PC-9 (cell line): ENCODE measurements at regions of chr7 and their contacts with region 1.

Region 1: DNA sequence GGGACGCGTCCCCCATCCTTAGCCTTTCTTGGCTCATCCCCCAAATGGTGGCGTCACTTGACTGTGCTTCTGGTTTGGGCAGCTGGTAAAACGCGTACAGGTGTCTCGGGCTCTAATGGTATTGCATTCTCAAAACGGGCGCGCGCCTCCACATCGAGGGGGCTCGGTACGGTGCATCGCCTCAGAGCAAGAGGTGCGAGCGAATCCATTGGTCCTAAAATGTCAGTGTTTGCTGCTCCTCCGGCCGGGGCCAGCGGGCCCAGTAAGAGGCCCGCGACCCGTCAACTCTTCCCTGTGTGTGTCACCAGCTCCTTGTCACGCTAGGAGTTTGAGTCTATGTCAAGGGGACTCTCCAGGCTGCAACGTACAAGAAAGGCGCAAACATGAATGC is 90.6 kb upstream of the SH2B2 start:
- DNase-seq: no peak
- H3K4me3 ChIP-seq: no peak overlapping the region
- H3K27ac ChIP-seq: no peak overlapping the region
- H3K4me1 ChIP-seq: no peaks in the 10 kb centered on the region
- H3K27me3 ChIP-seq: no peaks in the 10 kb centered on the region
- CTCF ChIP-seq: no peak

Region 2: DNA sequence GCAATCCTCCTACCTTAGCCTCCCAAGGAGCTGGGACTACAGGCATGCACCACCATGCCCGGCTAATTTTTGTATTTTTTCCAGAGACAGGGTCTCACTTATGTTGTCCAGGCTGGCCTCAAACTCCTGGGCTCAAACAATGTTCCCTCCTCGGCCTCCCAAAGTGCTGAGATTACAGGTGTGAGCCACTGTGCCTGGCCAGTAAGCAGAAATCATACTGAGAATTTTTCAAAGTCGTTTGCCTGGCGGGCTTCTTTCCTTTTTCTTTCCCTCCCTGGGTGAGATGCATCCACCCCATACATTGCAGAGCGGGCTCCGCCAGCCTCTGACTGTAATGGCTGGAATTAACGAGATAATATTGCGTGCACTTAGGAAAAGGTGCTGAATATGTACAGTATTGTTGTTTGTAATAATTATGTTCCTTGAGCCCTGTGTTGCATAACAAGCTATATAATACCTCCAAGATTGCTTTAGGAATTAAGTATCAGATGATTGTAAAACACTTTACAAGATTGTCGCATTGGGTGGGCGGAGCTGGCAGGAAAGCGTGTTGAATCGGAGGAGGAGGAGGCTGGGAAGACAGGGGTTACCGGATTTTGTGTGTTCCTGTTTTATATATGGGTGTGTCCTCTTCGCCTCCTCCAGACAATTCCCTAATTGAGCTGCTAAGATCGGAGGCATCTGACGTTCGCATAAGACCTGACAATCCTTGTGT is 102.6 kb before region 1 on chr7:
- CTCF ChIA-PET with region 1: no interaction called
- POLR2A ChIA-PET with region 1: no interaction called
- intact Hi-C with region 1: no loop called
- DNase-seq: no peak
- H3K4me3 ChIP-seq: no peak overlapping the region
- H3K27ac ChIP-seq: no peak overlapping the region
- H3K4me1 ChIP-seq: no peaks in the 10 kb centered on the region; the same call in 1 of the 2 replicates
- H3K27me3 ChIP-seq: no peaks in the 10 kb centered on the region
- CTCF ChIP-seq: no peak

Region 3: DNA sequence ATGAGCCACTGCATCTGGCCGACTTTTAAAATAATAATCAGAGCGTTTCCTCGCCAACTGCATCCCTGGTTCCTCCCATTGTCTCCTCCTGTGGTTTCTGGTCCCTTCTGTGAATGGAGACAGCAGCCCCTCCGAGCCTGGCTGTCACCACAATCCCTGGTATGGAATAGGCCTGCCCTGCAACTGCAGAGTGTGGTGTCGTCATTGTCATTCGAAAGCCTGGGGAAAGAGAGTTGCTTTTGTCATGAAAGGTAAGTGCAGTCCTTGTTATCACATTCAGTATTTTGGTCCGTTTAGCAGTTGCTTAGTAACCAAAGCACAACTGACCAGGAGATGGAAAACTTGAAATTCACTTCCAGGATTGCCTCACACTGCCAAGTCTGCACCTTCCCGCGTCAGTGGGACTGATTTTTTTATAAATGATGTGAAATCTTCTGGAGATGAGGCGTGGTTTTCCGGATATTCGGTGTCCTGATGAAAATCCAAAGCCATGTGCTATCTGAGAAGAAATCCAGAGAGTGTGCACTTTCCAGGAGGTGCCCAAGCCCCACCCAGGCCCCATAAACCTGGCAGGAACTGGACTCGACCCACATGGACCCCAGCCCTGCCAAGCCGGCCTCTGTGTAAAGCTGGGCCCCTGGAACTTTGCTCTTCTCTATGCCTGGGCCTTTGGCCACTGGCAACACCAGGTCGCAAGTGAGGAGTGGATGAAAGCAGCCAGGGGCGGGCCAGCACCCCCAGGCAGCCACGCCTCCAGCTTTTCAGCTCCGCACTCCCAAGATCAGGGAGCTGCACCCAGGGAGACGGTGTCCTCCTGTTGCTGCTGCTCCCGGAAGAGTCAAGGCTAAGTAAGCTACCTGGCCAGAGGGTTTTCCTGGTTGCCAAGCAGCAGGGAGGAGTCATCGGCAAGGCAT is 43.1 kb before region 1 on chr7:
- CTCF ChIA-PET with region 1: no interaction called
- POLR2A ChIA-PET with region 1: no interaction called
- intact Hi-C with region 1: no loop called
- DNase-seq: peak; percentile 97 to 98
- H3K4me3 ChIP-seq: peak overlapping the region; percentile 36; the same call in 1 of the 2 replicates
- H3K27ac ChIP-seq: peak overlapping the region; percentile 99
- H3K4me1 ChIP-seq: peaks cover 41% of the 10 kb centered on the region
- H3K27me3 ChIP-seq: no peaks in the 10 kb centered on the region
- CTCF ChIP-seq: no peak

Region 4: DNA sequence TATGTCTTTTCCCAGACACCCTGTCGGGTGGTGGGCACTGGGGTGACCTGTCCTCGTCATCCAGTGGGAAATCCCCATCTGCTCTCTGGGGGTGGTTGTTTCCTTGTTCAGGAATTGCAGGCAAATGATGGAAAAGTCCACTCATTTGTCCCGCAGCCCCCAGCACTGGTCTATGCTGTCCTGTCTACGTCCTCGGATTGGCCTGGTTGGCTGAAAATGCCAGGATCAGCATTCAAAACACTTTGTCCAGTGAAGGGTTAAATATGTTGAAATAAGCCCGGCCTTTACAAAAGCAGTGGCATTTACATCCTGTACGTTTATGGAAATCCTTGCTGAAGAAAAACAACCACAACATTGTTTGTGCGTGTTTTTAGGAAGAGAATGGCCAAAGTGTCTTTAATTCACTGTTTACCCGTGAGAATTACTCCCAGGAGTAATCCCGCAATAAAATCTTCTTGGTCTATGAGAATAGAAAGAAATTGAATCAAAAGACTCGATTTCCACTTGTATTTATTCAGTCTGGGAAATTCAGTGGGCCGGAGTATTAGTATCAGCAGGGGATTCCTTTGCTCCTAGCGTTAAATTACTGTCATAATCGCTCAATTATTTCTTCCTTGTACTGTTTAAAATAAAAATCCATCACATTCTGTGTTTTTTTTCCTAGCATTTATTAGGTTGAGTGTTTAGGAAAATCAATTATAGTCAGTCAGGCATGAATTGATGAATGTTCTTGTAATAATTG is 26.2 kb before region 1 on chr7:
- CTCF ChIA-PET with region 1: no interaction called
- POLR2A ChIA-PET with region 1: interaction called, 31 read pairs
- intact Hi-C with region 1: no loop called
- DNase-seq: no peak
- H3K4me3 ChIP-seq: no peak overlapping the region
- H3K27ac ChIP-seq: no peak overlapping the region
- H3K4me1 ChIP-seq: no peaks in the 10 kb centered on the region
- H3K27me3 ChIP-seq: no peaks in the 10 kb centered on the region
- CTCF ChIP-seq: no peak

Region 5: DNA sequence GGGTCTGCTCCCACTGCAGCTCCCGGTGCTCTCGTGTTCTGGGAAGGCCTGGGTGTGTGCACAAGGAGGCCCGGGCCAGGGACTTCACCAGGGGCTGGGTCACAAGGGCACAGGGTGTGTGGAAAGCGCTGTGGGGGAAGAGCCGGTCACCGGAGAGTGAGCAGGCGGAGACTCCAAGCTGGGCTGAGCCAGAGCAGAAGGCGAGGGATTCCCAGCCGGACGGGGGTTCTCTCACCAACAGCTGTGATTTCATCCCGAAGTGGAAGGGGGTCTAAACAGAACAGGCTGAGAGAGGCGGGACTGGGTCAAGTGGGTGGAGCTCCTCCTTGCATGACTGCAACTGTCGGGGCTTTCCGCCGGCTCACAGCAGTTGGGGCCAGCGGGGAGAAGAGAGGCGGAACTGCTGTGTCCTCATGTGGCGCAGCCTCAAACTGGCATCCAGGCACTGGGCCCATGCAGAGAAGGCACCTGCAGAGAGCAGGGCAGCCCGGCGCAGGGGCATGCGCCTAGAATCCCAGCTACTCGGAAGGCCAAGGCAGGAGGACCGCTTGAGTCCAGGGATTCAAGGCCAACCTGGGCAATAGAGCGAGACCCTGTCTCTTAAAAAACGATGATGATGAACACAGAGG is 229.7 kb after region 1 on chr7:
- CTCF ChIA-PET with region 1: no interaction called
- POLR2A ChIA-PET with region 1: no interaction called
- intact Hi-C with region 1: no loop called
- DNase-seq: no peak
- H3K4me3 ChIP-seq: no peak overlapping the region
- H3K27ac ChIP-seq: no peak overlapping the region
- H3K4me1 ChIP-seq: peaks cover 11% of the 10 kb centered on the region
- H3K27me3 ChIP-seq: no peaks in the 10 kb centered on the region
- CTCF ChIP-seq: no peak

Region 6: GRCh38 chr7:103532955-103533354 is 1336.9 kb after region 1 on chr7:
- CTCF ChIA-PET with region 1: no interaction called
- POLR2A ChIA-PET with region 1: no interaction called
- intact Hi-C with region 1: no loop called
- DNase-seq: no peak
- H3K4me3 ChIP-seq: no peak overlapping the region
- H3K27ac ChIP-seq: no peak overlapping the region
- H3K4me1 ChIP-seq: no peaks in the 10 kb centered on the region
- H3K27me3 ChIP-seq: 0 out of 2 replicates have a peak, but pooled peaks cover 4% of the 10 kb centered on the region
- CTCF ChIP-seq: no peak